ENCODE measurements at regions of chr9 and their contacts with region 1.

Region 1: GRCh38 chr9:24824607-24825006 is 278.9 kb upstream of the IZUMO3 start:
- DNase-seq: no peak
- ATAC-seq: no peak
- H3K4me3 Mint-ChIP-seq: no peak overlapping the region
- H3K27ac Mint-ChIP-seq: no peak overlapping the region
- H3K4me1 Mint-ChIP-seq: no peaks in the 10 kb centered on the region
- H3K27me3 Mint-ChIP-seq: no peaks in the 10 kb centered on the region
- CTCF ChIP-seq: no peak

Region 2: DNA sequence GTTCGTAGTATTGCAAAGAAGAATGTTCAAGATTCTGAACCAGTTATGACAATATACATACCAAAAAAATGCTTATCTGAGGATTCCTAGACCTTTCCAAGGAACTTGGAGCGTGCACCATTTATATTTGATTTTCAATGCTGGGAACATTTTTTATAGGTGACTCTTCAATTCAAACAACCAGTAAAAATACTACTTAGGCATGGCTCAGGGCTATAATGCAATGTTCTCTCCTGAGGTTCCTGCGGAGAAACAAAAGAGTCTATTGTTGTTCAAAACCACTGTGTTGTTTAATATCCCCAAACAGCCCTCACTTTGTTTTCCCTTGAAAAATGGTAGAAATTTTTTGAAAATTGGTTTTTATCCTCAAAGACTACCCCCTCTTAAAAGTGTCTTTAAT is 56.8 kb after region 1 on chr9:
- CTCF ChIA-PET with region 1: no interaction called
- POLR2A ChIA-PET with region 1: no interaction called
- intact Hi-C with region 1: loop called (anchors 10 kb)
- DNase-seq: no peak
- ATAC-seq: no peak
- H3K4me3 Mint-ChIP-seq: no peak overlapping the region
- H3K27ac Mint-ChIP-seq: no peak overlapping the region
- H3K4me1 Mint-ChIP-seq: no peaks in the 10 kb centered on the region
- H3K27me3 Mint-ChIP-seq: no peaks in the 10 kb centered on the region
- CTCF ChIP-seq: no peak

Region 3: DNA sequence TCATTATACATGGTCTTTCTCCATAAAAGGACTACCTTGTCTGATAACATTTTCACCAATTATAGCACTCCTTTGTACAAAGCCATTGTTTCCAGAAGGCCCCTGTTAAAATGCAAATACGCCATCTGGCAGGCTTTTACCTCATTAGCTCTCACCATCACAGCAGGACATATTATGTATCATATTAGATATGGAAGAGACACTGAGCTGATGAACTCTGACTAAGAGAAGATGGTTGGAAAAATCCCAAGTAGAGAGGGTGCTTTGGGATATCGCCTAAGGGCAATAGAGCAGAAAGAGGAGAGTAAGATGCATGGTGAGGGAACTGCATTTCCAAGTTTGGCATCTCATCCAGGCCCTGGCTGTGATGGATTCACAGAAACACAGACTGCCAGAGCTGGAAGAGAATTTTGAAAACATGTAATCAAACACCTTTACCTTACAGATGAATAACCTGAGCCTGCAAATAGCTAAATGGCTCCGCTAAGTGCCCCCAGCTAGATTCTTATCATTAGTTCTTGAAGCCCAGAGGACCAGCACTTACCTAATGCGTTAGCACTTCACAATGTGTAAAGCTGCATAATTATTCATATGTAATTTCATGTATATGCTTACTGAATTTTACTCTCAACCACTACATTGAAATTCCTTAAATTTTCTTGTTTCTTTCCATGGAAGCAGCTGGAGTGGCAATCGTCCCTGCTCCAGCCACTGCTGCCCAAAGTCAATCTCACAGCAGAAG is 114.7 kb after region 1 on chr9:
- CTCF ChIA-PET with region 1: no interaction called
- POLR2A ChIA-PET with region 1: no interaction called
- intact Hi-C with region 1: no loop called
- DNase-seq: no peak
- ATAC-seq: no peak
- H3K4me3 Mint-ChIP-seq: no peak overlapping the region
- H3K27ac Mint-ChIP-seq: no peak overlapping the region
- H3K4me1 Mint-ChIP-seq: peaks cover 1% of the 10 kb centered on the region
- H3K27me3 Mint-ChIP-seq: no peaks in the 10 kb centered on the region
- CTCF ChIP-seq: no peak

Region 4: GRCh38 chr9:25700430-25700829 is 875.8 kb after region 1 on chr9:
- CTCF ChIA-PET with region 1: no interaction called
- POLR2A ChIA-PET with region 1: no interaction called
- intact Hi-C with region 1: no loop called
- DNase-seq: no peak
- ATAC-seq: no peak
- H3K4me3 Mint-ChIP-seq: no peak overlapping the region
- H3K27ac Mint-ChIP-seq: no peak overlapping the region
- H3K4me1 Mint-ChIP-seq: no peaks in the 10 kb centered on the region
- H3K27me3 Mint-ChIP-seq: no peaks in the 10 kb centered on the region
- CTCF ChIP-seq: no peak